Activated CD4-positive, alpha-beta memory T cell treated with anti-CD3 and anti-CD28 coated beads for 36 hours (primary cell): ENCODE measurements at regions of chr3 and their contacts with region 1.

Region 1: GRCh38 chr3:16264708-16265454 is at the starts of genes DPH3 and OXNAD1:
- DNase-seq: peak; percentile 99
- H3K4me3 Mint-ChIP-seq: peak within 1 kb of the TSS; percentile 93
- H3K27ac Mint-ChIP-seq: peak within 1 kb of the TSS; percentile 94
- H3K4me1 Mint-ChIP-seq: peaks cover 36% of the 10 kb centered on the region
- H3K27me3 Mint-ChIP-seq: no peaks in the 10 kb centered on the region
- total RNA-seq, gene DPH3: 23.4 TPM
- total RNA-seq, gene OXNAD1: 23.5 to 24.0 TPM

Region 2: DNA sequence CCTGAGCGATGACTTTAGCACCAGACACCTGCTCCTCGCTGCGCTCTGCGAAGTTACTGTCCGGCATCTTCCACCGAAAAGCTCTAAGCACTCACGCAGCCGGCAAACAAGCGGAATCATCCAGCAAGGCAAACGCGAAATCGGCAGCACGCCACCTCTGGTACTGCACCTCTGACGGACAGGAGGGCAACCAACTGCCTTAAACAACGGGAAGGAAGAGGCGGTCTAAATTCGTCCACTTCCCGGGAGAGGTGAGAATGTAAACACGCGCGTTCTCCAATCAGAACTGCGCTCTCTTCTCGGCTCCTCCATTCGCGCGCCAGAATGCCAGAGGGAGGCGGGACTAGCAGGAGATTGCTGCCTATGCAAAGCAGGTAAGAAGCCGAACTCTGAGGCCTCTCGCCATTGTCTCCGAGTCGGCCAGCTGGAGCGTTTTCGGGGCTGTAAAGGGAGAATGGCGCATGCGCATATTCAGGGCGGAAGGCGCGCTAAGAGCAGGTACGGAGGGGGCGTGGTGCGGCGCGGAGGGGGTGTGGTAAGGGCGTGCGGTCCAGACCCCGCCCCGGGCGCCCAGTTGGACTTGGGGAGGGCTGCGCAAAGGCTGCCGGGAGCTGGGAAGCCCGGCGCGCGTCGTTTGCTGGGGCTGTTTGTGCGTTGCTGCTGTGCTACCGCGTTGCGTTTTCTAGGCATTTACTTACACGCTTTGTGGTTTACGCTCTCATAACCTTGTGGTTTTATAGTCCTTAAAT is 663.3 kb before region 1 on chr3 and contains the starts of genes BTD and HACL1:
- CTCF ChIA-PET with region 1: no interaction called
- POLR2A ChIA-PET with region 1: no interaction called
- intact Hi-C with region 1: loop called (anchors 1 kb)
- DNase-seq: peak; percentile 98
- H3K4me3 Mint-ChIP-seq: peak within 1 kb of the TSS; percentile 99
- H3K27ac Mint-ChIP-seq: peak within 1 kb of the TSS; percentile 94
- H3K4me1 Mint-ChIP-seq: peaks cover 43% of the 10 kb centered on the region
- H3K27me3 Mint-ChIP-seq: no peaks in the 10 kb centered on the region
- total RNA-seq, gene BTD: 8.6 to 8.7 TPM
- total RNA-seq, gene HACL1: 29.9 to 30.0 TPM

Region 3: DNA sequence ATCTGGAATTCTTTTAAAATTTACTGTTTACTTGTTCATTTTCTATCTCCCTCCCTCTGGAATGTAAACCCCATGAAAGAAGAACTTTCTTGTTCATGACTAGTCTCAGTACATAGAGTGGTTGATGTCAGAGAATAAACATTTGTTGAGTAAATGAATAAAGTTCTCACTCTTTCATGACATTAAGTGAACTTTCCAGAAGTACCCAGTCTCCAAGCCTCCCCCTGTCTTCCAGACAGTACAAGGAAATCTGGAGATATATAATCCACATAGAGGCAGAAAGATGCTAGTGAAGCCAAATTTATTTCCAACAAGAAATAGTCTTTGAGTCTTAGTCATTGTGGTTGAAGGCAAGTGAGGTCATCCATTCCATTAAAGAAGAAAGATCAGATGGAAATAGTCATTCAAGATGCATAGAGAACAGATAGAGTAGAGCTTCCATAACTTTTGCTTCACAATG is 161.9 kb before region 1 on chr3:
- CTCF ChIA-PET with region 1: no interaction called
- POLR2A ChIA-PET with region 1: no interaction called
- intact Hi-C with region 1: no loop called
- DNase-seq: no peak
- H3K4me3 Mint-ChIP-seq: no peak overlapping the region
- H3K27ac Mint-ChIP-seq: no peak overlapping the region
- H3K4me1 Mint-ChIP-seq: peaks cover 7% of the 10 kb centered on the region
- H3K27me3 Mint-ChIP-seq: peaks cover 7% of the 10 kb centered on the region

Region 4: GRCh38 chr3:16177962-16178627 is 86.8 kb before region 1 on chr3:
- CTCF ChIA-PET with region 1: no interaction called
- POLR2A ChIA-PET with region 1: no interaction called
- intact Hi-C with region 1: no loop called
- DNase-seq: peak; percentile 74
- H3K4me3 Mint-ChIP-seq: no peak overlapping the region
- H3K27ac Mint-ChIP-seq: no peak overlapping the region
- H3K4me1 Mint-ChIP-seq: peaks cover 3% of the 10 kb centered on the region
- H3K27me3 Mint-ChIP-seq: peaks cover 13% of the 10 kb centered on the region

Region 5: DNA sequence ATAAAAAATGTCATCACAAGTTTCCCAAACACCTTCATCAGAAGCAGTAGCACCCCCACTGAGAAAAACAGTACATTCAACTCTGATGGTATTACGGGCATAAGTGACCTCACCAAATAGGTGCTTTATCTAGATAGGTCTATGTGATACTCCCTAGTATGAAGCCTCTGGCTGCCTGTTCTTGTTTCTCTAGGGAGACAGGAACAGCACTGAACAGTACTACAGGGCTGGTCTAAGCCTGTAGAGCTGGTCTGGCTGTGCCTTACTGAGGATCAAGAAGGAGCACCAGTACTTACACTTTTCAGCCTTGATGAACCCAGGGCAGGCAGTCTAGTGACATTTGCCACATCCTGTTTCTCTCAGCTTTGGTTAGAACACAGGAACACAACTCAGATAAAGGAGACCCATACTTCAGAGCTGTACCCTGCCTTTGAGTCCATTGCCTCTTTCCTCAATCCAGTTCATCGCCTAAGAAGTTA is 36.0 kb after region 1 on chr3:
- CTCF ChIA-PET with region 1: interaction called, 9 read pairs
- POLR2A ChIA-PET with region 1: interaction called, 10 read pairs
- intact Hi-C with region 1: no loop called
- DNase-seq: peak; percentile 62
- H3K4me3 Mint-ChIP-seq: peak overlapping the region; percentile 66
- H3K27ac Mint-ChIP-seq: peak overlapping the region; percentile 91
- H3K4me1 Mint-ChIP-seq: peaks cover 96% of the 10 kb centered on the region
- H3K27me3 Mint-ChIP-seq: no peaks in the 10 kb centered on the region

Region 6: GRCh38 chr3:16319307-16319706 is 54.4 kb after region 1 on chr3:
- CTCF ChIA-PET with region 1: interaction called, 49 read pairs
- POLR2A ChIA-PET with region 1: interaction called, 11 read pairs
- intact Hi-C with region 1: loop called (anchors 1 kb)
- DNase-seq: peak; percentile 91
- H3K4me3 Mint-ChIP-seq: no peak overlapping the region
- H3K27ac Mint-ChIP-seq: peak overlapping the region; percentile 80
- H3K4me1 Mint-ChIP-seq: peaks cover 64% of the 10 kb centered on the region
- H3K27me3 Mint-ChIP-seq: no peaks in the 10 kb centered on the region

Region 7: DNA sequence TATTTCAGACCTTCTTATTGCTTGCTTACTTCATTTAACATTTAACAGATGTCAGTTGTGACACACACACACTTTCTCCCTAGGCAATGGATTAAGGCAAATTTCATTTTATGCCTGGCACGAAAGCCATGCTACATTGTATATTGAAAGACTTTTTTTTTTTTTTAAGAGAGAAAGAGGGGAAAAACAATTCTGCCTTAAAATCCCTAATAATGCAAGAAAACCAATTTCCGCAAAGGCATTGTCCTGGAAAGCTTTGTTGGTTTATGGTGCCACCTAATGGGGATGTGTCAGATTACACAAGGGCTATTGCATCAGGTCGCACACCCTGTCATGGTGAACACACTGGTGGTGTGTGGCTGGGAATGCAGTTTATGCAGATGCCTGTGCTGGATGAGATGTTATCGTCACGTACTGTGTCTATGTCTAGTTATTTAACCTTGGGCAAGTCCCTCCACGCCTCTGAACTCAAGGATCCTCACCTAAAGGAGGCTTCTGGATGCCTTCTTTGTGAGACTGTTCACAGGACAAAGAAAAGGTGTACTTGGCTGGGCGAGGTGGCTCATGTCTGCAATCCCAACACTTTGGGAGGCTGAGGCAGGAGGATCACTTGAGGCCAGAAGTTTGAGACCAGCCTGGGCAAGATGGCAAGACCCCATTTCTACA is 285.9 kb after region 1 on chr3:
- CTCF ChIA-PET with region 1: interaction called, 61 read pairs
- POLR2A ChIA-PET with region 1: interaction called, 3 read pairs
- intact Hi-C with region 1: loop called (anchors 1 kb)
- DNase-seq: peak; percentile 82
- H3K4me3 Mint-ChIP-seq: peak overlapping the region; percentile 3
- H3K27ac Mint-ChIP-seq: peak overlapping the region; percentile 59
- H3K4me1 Mint-ChIP-seq: peaks cover 3% of the 10 kb centered on the region
- H3K27me3 Mint-ChIP-seq: peaks cover 5% of the 10 kb centered on the region